Natural killer cell (primary cell): ENCODE measurements at regions of chr1 and their contacts with region 1.

Region 1: DNA sequence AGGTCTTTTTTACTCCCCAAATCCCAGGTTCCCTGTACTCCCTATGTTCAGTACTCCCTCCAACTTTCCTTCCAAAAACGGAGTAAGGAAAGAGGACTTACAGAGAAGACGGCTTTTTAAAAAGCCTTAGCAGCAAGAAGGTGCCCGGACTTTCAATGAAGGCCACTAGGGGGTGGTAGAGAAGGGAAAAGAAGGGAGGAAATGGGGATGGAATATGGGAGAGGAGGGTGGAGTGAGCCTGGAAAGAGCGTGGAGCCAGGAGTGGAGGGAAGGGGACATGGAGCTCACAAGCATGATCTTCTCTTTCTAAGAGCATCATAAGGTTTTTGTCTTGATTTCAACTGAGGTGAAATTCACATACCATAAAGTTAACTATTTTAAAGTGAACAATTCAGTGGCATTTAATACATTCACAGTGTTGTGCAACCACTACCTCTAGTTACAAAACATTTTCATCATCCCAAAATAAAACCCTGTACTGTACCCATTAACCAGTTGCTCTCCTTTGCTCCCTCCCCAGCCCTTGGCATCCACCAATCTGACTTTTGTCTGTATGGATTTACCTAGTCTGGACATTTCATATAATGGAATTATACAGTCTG is 129.9 kb downstream of the ZNF281 start:
- DNase-seq: peak in 1 of 2 donors; percentile 59
- ATAC-seq: peak in 1 of 3 donors; percentile 42
- H3K4me3 ChIP-seq: no peak overlapping the region
- H3K4me3 Mint-ChIP-seq: no peak overlapping the region
- H3K27ac ChIP-seq: no peak overlapping the region
- H3K27ac Mint-ChIP-seq: no peak overlapping the region
- H3K4me1 ChIP-seq: no peaks in the 10 kb centered on the region
- H3K4me1 Mint-ChIP-seq: no peaks in the 10 kb centered on the region
- H3K27me3 ChIP-seq: no peaks in the 10 kb centered on the region
- H3K27me3 Mint-ChIP-seq: peaks cover 0 to 10% of the 10 kb centered on the region in 2 donors
- CTCF ChIP-seq: peak; percentile 54

Region 2: DNA sequence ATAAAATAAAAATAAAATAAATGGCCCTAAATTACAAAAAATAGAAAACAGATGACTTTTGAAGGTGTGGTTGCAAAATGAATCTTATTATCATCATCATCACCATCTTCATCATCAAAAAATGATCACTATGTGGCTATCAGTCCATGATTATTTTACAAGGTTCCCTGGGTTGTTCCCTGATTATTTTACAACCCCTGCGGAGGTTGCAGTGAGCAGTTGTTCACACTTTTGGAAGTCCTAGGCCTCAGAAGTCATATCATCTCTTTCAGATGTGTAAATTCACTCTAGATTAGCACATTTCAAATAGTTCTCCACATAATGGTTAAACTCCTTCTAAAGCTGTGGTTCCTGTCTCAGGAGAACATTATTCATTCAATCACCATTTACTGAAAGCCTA is 309.8 kb before region 1 on chr1:
- intact Hi-C with region 1: no loop called
- DNase-seq: no peak
- ATAC-seq: no peak
- H3K4me3 ChIP-seq: no peak overlapping the region
- H3K4me3 Mint-ChIP-seq: no peak overlapping the region
- H3K27ac ChIP-seq: no peak overlapping the region
- H3K27ac Mint-ChIP-seq: no peak overlapping the region
- H3K4me1 ChIP-seq: no peaks in the 10 kb centered on the region
- H3K4me1 Mint-ChIP-seq: no peaks in the 10 kb centered on the region
- H3K27me3 ChIP-seq: no peaks in the 10 kb centered on the region
- H3K27me3 Mint-ChIP-seq: peaks cover 0 to 9% of the 10 kb centered on the region in 2 donors
- CTCF ChIP-seq: no peak

Region 3: GRCh38 chr1:200207711-200208126 is 72.2 kb before region 1 on chr1:
- intact Hi-C with region 1: no loop called
- DNase-seq: peak in 1 of 2 donors; percentile 34
- ATAC-seq: peak; percentile 56 to 79 (median 64)
- H3K4me3 ChIP-seq: no peak overlapping the region
- H3K4me3 Mint-ChIP-seq: no peak overlapping the region
- H3K27ac ChIP-seq: no peak overlapping the region
- H3K27ac Mint-ChIP-seq: no peak overlapping the region
- H3K4me1 ChIP-seq: no peaks in the 10 kb centered on the region
- H3K4me1 Mint-ChIP-seq: no peaks in the 10 kb centered on the region
- H3K27me3 ChIP-seq: no peaks in the 10 kb centered on the region
- H3K27me3 Mint-ChIP-seq: peaks cover 0 to 11% of the 10 kb centered on the region in 2 donors
- CTCF ChIP-seq: no peak

Region 4: GRCh38 chr1:200488375-200489165 is 208.7 kb after region 1 on chr1:
- intact Hi-C with region 1: loop called (anchors 10 kb)
- DNase-seq: peak in 1 of 2 donors; percentile 70
- ATAC-seq: peak in 2 of 3 donors; percentile 57 to 61
- H3K4me3 ChIP-seq: no peak overlapping the region
- H3K4me3 Mint-ChIP-seq: no peak overlapping the region
- H3K27ac ChIP-seq: no peak overlapping the region
- H3K27ac Mint-ChIP-seq: no peak overlapping the region
- H3K4me1 ChIP-seq: no peaks in the 10 kb centered on the region
- H3K4me1 Mint-ChIP-seq: no peaks in the 10 kb centered on the region
- H3K27me3 ChIP-seq: no peaks in the 10 kb centered on the region
- H3K27me3 Mint-ChIP-seq: peaks cover 11 to 40% of the 10 kb centered on the region in 2 donors
- CTCF ChIP-seq: peak; percentile 62

Region 5: DNA sequence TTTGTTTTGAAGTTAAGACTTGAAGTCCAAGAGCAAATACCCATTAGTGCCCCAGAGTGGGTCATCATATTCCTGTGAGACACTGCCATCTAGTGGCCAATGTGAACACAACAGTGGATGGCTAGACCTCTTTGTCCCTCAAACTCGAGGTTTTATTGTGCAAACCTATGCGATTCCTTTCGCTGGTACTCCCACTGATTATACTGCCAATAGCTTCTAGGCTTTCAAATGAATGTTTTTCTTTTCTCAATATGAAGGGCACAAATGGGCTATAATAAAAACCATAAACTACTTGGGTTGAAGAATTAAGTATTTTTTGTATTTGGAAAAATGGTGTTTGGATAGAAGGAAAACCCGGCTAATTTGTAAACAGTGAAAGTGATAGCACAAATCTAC is 230.3 kb after region 1 on chr1:
- intact Hi-C with region 1: loop called (anchors 2 kb)
- DNase-seq: peak; percentile 37 to 85
- ATAC-seq: peak; percentile 82 to 96 (median 87)
- H3K4me3 ChIP-seq: no peak overlapping the region
- H3K4me3 Mint-ChIP-seq: no peak overlapping the region
- H3K27ac ChIP-seq: no peak overlapping the region
- H3K27ac Mint-ChIP-seq: no peak overlapping the region
- H3K4me1 ChIP-seq: no peaks in the 10 kb centered on the region
- H3K4me1 Mint-ChIP-seq: no peaks in the 10 kb centered on the region
- H3K27me3 ChIP-seq: no peaks in the 10 kb centered on the region
- H3K27me3 Mint-ChIP-seq: peaks cover 14 to 29% of the 10 kb centered on the region in 2 donors
- CTCF ChIP-seq: peak; percentile 96